Right ventricle myocardium superior (tissue), 1 donor: ENCODE measurements at regions of chr4 and their contacts with region 1.

Region 1: GRCh38 chr4:5050520-5051277 is 581 bp upstream of the STK32B start:
- DNase-seq: peak; percentile 81
- ATAC-seq: peak; percentile 93

Region 2: GRCh38 chr4:4480685-4481398 is 569.9 kb before region 1 on chr4:
- intact Hi-C with region 1: no loop called
- DNase-seq: no peak
- ATAC-seq: peak; percentile 59

Region 3: DNA sequence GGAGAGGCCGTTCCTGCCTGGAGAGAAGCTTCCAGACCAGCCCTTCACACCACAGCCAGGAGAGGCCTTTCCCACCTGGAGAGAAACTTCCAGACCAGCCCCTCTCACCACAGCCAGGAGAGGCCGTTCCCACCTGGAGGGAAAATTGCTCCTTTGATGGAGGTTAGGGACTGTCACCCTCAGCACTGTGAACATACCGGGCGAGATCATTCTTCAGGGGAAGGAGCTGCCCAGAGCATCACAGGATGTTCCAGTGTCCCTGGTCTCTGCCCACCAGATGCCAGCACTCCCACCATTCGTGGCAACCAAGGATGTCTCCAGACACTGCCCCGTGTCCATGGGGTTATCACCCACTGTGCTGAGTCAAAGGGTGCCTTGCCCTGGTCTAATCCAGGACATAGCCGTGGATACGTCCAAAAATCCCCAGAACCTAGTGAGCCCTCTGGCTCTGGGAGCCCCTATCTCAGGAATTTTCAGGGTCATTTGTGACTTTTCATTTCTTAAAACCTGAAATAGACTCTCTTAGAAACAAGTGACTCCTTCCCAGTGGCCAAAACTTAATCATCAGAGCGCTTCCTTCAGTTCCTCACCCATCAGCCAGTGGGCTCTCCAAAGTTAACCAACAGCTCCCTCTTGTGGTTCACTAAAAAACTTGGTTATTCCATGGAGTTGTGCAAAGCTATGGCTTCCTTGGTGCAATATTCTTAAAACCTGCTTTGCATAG is 762.0 kb after region 1 on chr4:
- intact Hi-C with region 1: loop called (anchors 10 kb)
- DNase-seq: no peak
- ATAC-seq: peak; percentile 74